Uterus (tissue), 4 donors: ENCODE measurements at regions of chr10 and their contacts with region 1.

Region 1: GRCh38 chr10:84537447-84537931 is 209.1 kb downstream of the CCSER2 start:
- DNase-seq: peak; percentile 33 to 37
- H3K4me3 ChIP-seq: no peak overlapping the region
- H3K27ac ChIP-seq: no peak overlapping the region
- H3K4me1 ChIP-seq: no peaks in the 10 kb centered on the region
- H3K27me3 ChIP-seq: no peaks in the 10 kb centered on the region
- CTCF ChIP-seq: peak; percentile 73 to 94 (median 77)
- POLR2A ChIP-seq: no peak

Region 2: GRCh38 chr10:84264611-84265141 is 272.8 kb before region 1 on chr10:
- intact Hi-C with region 1: loop called (anchors 5 kb)
- DNase-seq: peak; percentile 46 to 57
- H3K4me3 ChIP-seq: no peak overlapping the region
- H3K27ac ChIP-seq: no peak overlapping the region
- H3K4me1 ChIP-seq: no peaks in the 10 kb centered on the region
- H3K27me3 ChIP-seq: no peaks in the 10 kb centered on the region
- CTCF ChIP-seq: peak; percentile 76 to 87 (median 78)
- POLR2A ChIP-seq: no peak

Region 3: GRCh38 chr10:84375011-84375410 is 162.5 kb before region 1 on chr10:
- intact Hi-C with region 1: loop called (anchors 5 kb)
- DNase-seq: peak in 1 of 2 donors; percentile 40
- H3K4me3 ChIP-seq: no peak overlapping the region
- H3K27ac ChIP-seq: no peak overlapping the region
- H3K4me1 ChIP-seq: no peaks in the 10 kb centered on the region
- H3K27me3 ChIP-seq: no peaks in the 10 kb centered on the region
- CTCF ChIP-seq: peak; percentile 66 to 75 (median 69)
- POLR2A ChIP-seq: no peak